CD4-positive, alpha-beta T cell (primary cell): ENCODE measurements at regions of chr9 and their contacts with region 1.

Region 1: DNA sequence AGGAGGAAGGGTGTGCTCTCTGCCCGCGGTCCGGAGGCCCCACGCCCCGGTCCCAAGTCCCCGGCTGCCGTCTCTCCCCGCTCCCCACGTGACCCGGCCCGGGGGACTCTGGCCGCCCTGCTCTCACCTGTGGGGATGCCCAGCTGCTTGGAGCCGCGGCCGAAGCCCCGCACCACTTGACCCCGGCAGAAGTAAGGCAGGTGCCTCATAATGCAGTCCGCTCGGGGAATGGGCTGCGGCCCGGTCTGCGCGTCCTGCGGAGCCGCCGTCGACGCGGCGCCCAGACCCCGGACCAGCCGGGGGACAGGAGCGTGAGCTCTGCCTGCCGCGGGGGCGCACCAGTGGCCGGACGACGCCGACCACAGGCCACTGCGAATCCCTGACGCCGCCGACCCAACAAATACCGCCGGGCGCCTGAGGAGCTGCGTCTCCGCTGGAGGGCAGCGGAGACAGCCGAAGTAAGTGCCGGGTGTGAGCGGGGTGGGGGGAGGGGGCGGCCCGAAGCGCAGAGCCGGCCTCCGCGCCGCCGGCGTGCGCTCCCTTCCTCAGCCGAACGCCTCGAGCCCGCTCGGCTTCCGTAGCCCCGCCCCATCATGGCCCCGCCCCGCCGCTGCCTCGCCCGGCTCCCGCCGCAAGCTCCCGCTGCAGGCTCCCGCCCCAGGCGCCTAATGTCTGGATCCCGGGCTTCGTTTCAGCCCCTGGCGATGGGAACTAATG is at the start of gene RFK:
- DNase-seq: peak; percentile 88 to 97 (median 94)
- ATAC-seq: peak; percentile 86
- H3K4me3 ChIP-seq: peak within 1 kb of the TSS; percentile 93
- H3K4me3 Mint-ChIP-seq: peak within 1 kb of the TSS; percentile 92
- H3K27ac ChIP-seq: peak within 1 kb of the TSS; percentile 78 to 80
- H3K27ac Mint-ChIP-seq: peak within 1 kb of the TSS; percentile 96
- H3K4me1 ChIP-seq: peaks cover 25% of the 10 kb centered on the region
- H3K4me1 Mint-ChIP-seq: peaks cover 40% of the 10 kb centered on the region
- H3K27me3 ChIP-seq: no peaks in the 10 kb centered on the region
- H3K27me3 Mint-ChIP-seq: no peaks in the 10 kb centered on the region
- CTCF ChIP-seq: peak; percentile 39
- total RNA-seq, gene RFK: 7.4 to 8.4 TPM

Region 2: GRCh38 chr9:74952281-74953151 is 1441.6 kb before region 1 on chr9 and contains the start of gene C9orf40:
- CTCF ChIA-PET with region 1: interaction called, 3 read pairs
- POLR2A ChIA-PET with region 1: no interaction called
- intact Hi-C with region 1: loop called in 1 of 2 experiments (anchors 10 kb)
- DNase-seq: peak; percentile 84 to 95 (median 90)
- ATAC-seq: peak; percentile 88
- H3K4me3 ChIP-seq: peak within 1 kb of the TSS; percentile 92
- H3K4me3 Mint-ChIP-seq: peak within 1 kb of the TSS; percentile 99
- H3K27ac ChIP-seq: peak within 1 kb of the TSS; percentile 81 to 83
- H3K27ac Mint-ChIP-seq: peak within 1 kb of the TSS; percentile 87
- H3K4me1 ChIP-seq: peaks cover 16% of the 10 kb centered on the region
- H3K4me1 Mint-ChIP-seq: peaks cover 28% of the 10 kb centered on the region
- H3K27me3 ChIP-seq: no peaks in the 10 kb centered on the region
- H3K27me3 Mint-ChIP-seq: no peaks in the 10 kb centered on the region
- CTCF ChIP-seq: peak; percentile 80
- total RNA-seq, gene C9orf40: 3.0 TPM

Region 3: GRCh38 chr9:75088260-75088905 is 1305.7 kb before region 1 on chr9 and contains the start of gene OSTF1:
- CTCF ChIA-PET with region 1: no interaction called
- POLR2A ChIA-PET with region 1: interaction called, 20 read pairs
- intact Hi-C with region 1: loop called in 1 of 2 experiments (anchors 10 kb)
- DNase-seq: peak; percentile 83 to 98 (median 91)
- ATAC-seq: peak; percentile 81
- H3K4me3 ChIP-seq: peak within 1 kb of the TSS; percentile 99
- H3K4me3 Mint-ChIP-seq: peak within 1 kb of the TSS; percentile 98
- H3K27ac ChIP-seq: peak within 1 kb of the TSS; percentile 89 to 90
- H3K27ac Mint-ChIP-seq: peak within 1 kb of the TSS; percentile 85
- H3K4me1 ChIP-seq: peaks cover 58% of the 10 kb centered on the region
- H3K4me1 Mint-ChIP-seq: peaks cover 79% of the 10 kb centered on the region
- H3K27me3 ChIP-seq: no peaks in the 10 kb centered on the region
- H3K27me3 Mint-ChIP-seq: no peaks in the 10 kb centered on the region
- CTCF ChIP-seq: no peak
- total RNA-seq, gene OSTF1: 31.3 to 32.8 TPM

Region 4: GRCh38 chr9:75890472-75891276 is 503.4 kb before region 1 on chr9 and contains the start of gene PCSK5:
- CTCF ChIA-PET with region 1: no interaction called
- POLR2A ChIA-PET with region 1: interaction called, 7 read pairs
- intact Hi-C with region 1: loop called in 1 of 2 experiments (anchors 5 kb)
- DNase-seq: peak; percentile 69 to 92 (median 81)
- ATAC-seq: peak; percentile 91
- H3K4me3 ChIP-seq: peak within 1 kb of the TSS; percentile 76
- H3K4me3 Mint-ChIP-seq: peak within 1 kb of the TSS; percentile 93
- H3K27ac ChIP-seq: peak within 1 kb of the TSS; percentile 11 to 63
- H3K27ac Mint-ChIP-seq: peak within 1 kb of the TSS; percentile 83
- H3K4me1 ChIP-seq: peaks cover 33% of the 10 kb centered on the region
- H3K4me1 Mint-ChIP-seq: peaks cover 50% of the 10 kb centered on the region
- H3K27me3 ChIP-seq: no peaks in the 10 kb centered on the region
- H3K27me3 Mint-ChIP-seq: no peaks in the 10 kb centered on the region
- CTCF ChIP-seq: no peak
- total RNA-seq, gene PCSK5: 14.4 to 15.2 TPM

Region 5: DNA sequence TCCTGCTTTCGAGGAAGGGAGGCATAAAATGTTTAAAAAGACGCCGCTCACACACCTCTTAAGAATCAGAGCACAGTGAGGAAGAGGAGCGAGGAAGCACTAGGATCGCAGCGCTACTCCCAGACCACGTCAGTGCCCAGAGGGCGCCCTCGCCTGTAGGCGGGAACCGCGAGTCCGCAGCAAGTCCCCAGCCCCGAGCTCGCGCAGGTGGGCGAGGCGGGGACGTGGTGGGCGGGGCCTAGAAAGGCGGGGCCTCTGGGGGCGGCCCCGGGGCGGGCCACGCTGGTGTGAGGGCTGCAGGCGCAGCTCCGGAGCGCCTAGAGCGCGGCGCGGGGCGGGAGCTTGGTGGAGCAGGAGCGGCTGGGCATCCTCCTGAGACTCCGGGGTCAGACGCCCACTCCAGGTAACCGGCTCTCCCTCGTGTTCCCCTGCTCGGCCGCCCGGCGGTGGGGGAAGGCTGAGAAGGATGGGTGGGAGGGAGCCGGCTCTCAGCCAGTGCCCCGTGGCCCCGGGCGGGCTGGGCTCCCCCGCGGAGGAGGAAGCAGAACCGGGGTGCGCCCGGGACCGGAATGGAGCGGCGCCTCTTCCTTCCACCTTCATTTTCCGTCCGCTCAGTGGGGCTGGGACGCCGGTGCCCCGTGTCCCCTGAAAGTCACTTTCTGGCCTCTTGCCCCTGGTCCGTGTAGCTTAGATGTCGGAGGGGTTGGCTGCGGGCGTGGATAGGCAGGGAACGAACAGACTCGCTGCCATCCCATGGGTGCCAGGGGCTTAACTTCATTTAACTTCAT is 65.0 kb after region 1 on chr9 and contains the start of gene GCNT1:
- CTCF ChIA-PET with region 1: interaction called, 3 read pairs
- POLR2A ChIA-PET with region 1: interaction called, 20 read pairs
- intact Hi-C with region 1: loop called in 1 of 2 experiments (anchors 2 kb)
- DNase-seq: peak; percentile 67 to 94 (median 86)
- ATAC-seq: peak; percentile 93
- H3K4me3 ChIP-seq: peak within 1 kb of the TSS; percentile 75
- H3K4me3 Mint-ChIP-seq: peak within 1 kb of the TSS; percentile 92
- H3K27ac ChIP-seq: no peak within 1 kb of the TSS
- H3K27ac Mint-ChIP-seq: peak within 1 kb of the TSS; percentile 1
- H3K4me1 ChIP-seq: peaks cover 25% of the 10 kb centered on the region
- H3K4me1 Mint-ChIP-seq: peaks cover 25% of the 10 kb centered on the region
- H3K27me3 ChIP-seq: no peaks in the 10 kb centered on the region
- H3K27me3 Mint-ChIP-seq: no peaks in the 10 kb centered on the region
- CTCF ChIP-seq: peak; percentile 43
- total RNA-seq, gene GCNT1: 0.36 to 0.53 TPM

Region 6: GRCh38 chr9:76704593-76705204 is 310.6 kb after region 1 on chr9:
- CTCF ChIA-PET with region 1: no interaction called
- POLR2A ChIA-PET with region 1: no interaction called
- intact Hi-C with region 1: loop called in 1 of 2 experiments (anchors 2 kb)
- DNase-seq: peak in 4 of 14 experiments; percentile 12 to 77 (median 66)
- ATAC-seq: no peak
- H3K4me3 ChIP-seq: no peak overlapping the region
- H3K4me3 Mint-ChIP-seq: no peak overlapping the region
- H3K27ac ChIP-seq: no peak overlapping the region
- H3K27ac Mint-ChIP-seq: no peak overlapping the region
- H3K4me1 ChIP-seq: peaks cover 3% of the 10 kb centered on the region
- H3K4me1 Mint-ChIP-seq: peaks cover 5% of the 10 kb centered on the region
- H3K27me3 ChIP-seq: peaks cover 5 to 9% of the 10 kb centered on the region in 2 experiments
- H3K27me3 Mint-ChIP-seq: peaks cover 48% of the 10 kb centered on the region
- CTCF ChIP-seq: peak; percentile 72

Region 7: DNA sequence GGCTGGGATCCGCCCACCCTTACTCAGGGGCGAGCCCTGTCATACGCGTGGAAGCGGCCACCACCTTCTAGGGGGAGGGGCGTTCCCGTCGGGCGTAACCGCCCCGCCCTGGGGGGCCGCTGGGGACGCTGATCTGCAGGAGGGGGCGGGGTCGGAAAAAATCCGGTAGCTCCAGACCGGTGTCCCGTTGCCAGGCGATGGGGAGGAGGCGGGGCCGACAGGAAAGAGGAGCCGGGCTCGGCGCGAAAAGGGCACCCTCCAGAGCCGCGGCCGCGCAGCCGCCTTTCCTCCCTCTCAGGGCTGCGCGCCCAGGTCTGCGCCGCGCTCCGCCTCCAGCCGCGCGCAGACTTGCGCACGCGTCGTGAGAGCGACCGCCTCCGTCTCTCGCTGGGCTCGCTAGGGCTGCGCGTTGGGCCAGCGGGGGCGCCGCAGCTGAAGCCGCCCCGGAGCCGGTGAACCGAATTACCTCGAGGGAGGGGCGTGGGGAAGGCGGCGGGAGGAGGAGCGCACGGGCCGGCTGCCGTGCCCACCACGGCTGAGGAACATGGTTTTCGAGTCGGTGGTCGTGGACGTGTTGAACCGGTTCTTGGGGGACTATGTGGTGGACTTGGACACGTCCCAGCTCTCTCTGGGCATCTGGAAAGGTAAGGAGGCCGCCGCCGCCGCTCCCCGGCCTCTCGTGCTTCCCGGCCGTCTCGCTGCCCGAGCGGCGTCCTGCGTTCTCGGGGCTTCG is 783.2 kb after region 1 on chr9 and contains the start of gene VPS13A:
- CTCF ChIA-PET with region 1: no interaction called
- POLR2A ChIA-PET with region 1: interaction called, 9 read pairs
- intact Hi-C with region 1: loop called in 1 of 2 experiments (anchors 5 kb)
- DNase-seq: peak; percentile 75 to 97 (median 86)
- ATAC-seq: peak; percentile 84
- H3K4me3 ChIP-seq: peak within 1 kb of the TSS; percentile 97
- H3K4me3 Mint-ChIP-seq: peak within 1 kb of the TSS; percentile 91
- H3K27ac ChIP-seq: peak within 1 kb of the TSS; percentile 79
- H3K27ac Mint-ChIP-seq: peak within 1 kb of the TSS; percentile 89
- H3K4me1 ChIP-seq: peaks cover 17% of the 10 kb centered on the region
- H3K4me1 Mint-ChIP-seq: peaks cover 41% of the 10 kb centered on the region
- H3K27me3 ChIP-seq: no peaks in the 10 kb centered on the region
- H3K27me3 Mint-ChIP-seq: no peaks in the 10 kb centered on the region
- CTCF ChIP-seq: peak; percentile 40
- total RNA-seq, gene VPS13A: 37.3 to 41.1 TPM